H1 (cell line): ENCODE measurements at regions of chr6 and their contacts with region 1.

Region 1: GRCh38 chr6:30611150-30611855 is 5.7 kb downstream of the PPP1R10 start:
- DNase-seq: no peak
- H3K4me3 ChIP-seq: no peak overlapping the region
- H3K27ac ChIP-seq: no peak overlapping the region
- H3K4me1 ChIP-seq: peaks cover 0 to 6% (median 3%) of the 10 kb centered on the region in 4 experiments; a peak in 4 of 7 replicates
- H3K27me3 ChIP-seq: no peaks in the 10 kb centered on the region
- CTCF ChIP-seq: no peak
- EP300 ChIP-seq: no peak
- POLR2A ChIP-seq: no peak
- RAD21 ChIP-seq: no peak

Region 2: GRCh38 chr6:30583921-30584320 is 27.4 kb before region 1 on chr6:
- CTCF ChIA-PET with region 1: interaction called, 5 read pairs
- POLR2A ChIA-PET with region 1: interaction called, 712 read pairs
- DNase-seq: no peak
- H3K4me3 ChIP-seq: no peak overlapping the region
- H3K27ac ChIP-seq: no peak overlapping the region
- H3K4me1 ChIP-seq: no peaks in the 10 kb centered on the region
- H3K27me3 ChIP-seq: no peaks in the 10 kb centered on the region
- CTCF ChIP-seq: no peak
- EP300 ChIP-seq: no peak
- POLR2A ChIP-seq: 0 out of 3 replicates have a peak, but pooled peaks of 1 of the 2 experiments have one; percentile 10
- RAD21 ChIP-seq: no peak